PC-9 (cell line): ENCODE measurements at regions of chr19 and their contacts with region 1.

Region 1: DNA sequence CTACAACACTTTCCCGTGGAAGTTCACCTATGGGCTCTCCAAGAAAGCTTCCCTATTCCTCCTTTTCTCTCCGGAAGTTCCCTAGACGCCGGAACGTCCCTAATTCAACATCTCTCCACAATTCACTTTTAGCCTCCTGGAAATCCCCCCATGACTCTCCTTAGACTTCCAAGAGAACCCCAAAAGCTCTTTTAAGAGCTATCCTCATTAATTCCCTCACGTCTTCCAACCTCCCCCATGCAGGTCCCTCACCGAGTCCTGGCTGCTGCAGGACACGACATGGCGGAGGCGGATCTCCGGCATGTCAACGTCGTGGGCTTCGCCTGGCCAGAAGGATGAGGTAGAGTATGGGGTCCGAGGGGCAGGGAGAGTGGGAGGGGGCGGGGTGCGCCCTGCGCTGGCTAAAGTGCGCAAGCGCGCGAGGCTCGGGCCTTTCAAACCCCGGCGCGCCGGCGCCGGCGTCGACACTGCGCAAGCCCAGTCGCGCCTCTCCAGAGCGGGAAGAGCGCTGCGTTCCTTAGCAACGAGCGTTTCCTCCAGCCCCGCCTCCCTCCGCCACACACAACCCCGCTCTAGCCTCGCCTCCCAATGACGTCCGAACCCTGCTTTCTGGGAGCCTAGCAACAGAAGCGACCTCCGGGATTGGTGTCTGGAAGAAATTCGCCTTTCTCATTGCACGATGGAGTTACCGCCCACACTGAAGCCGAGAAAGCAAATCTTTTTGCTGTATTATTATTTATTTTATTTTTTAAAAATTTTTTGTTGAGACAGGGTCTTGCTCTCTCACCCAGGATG is at the starts of genes PINLYP and XRCC1:
- DNase-seq: peak; percentile 92 to 95
- H3K4me3 ChIP-seq: peak within 1 kb of the TSS; percentile 94
- H3K27ac ChIP-seq: no peak within 1 kb of the TSS
- H3K4me1 ChIP-seq: peaks cover 10% of the 10 kb centered on the region; the same call in 1 of the 2 replicates
- H3K27me3 ChIP-seq: no peaks in the 10 kb centered on the region
- CTCF ChIP-seq: no peak
- total RNA-seq, gene PINLYP: 0.53 and 2.0 TPM in 2 replicates
- total RNA-seq, gene XRCC1: 37.2 and 45.1 TPM in 2 replicates

Region 2: DNA sequence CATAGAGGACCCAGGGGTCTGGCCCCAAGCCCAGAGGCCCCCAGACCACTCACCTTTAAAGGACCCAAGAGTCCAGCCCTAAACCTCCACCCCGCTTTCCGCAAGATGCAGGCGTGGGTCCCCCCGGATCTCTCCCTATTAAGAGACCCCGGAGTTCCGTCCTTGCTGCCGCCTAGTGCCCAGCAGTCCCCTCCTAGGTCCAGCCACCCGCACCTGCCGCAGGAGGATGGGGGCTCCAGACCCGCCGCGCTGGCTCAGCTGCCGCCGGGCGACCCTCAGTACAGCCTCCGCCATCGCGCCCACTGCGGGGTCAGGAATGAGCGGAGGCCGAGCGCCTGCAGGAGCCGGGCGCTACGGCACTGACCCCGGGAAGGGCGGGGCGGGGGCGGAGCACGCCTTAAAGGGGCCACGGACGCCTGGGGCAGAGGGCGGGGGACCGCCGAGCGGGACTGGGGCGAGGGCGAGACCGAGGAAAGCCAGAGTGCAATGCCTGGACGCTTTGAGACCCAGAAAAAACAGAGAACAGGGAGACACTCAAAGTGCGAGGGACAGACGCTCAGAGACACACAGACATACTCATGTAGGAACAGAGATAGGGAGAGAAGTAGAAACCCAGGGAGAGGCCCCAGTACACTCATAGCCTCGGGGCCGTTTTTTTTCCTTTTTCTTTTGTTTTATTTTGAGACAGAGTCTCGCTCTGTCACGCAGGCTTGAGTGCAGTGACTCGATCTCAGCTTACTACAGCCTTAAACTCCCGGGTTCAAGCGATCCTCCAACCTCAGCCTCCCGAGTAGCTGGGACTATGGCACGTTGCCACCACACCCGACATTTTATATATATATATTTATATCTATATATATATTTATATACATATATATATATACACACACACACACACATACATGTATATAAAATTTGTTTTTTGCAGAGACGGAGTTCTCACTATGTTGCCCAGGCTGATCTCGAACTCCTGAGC is 48.2 kb before region 1 on chr19 and contains the start of gene ETHE1:
- CTCF ChIA-PET with region 1: interaction called, 4 read pairs
- POLR2A ChIA-PET with region 1: no interaction called
- intact Hi-C with region 1: loop called (anchors 5 kb)
- DNase-seq: peak; percentile 37 to 81
- H3K4me3 ChIP-seq: peak within 1 kb of the TSS; percentile 97
- H3K27ac ChIP-seq: peak within 1 kb of the TSS; percentile 46
- H3K4me1 ChIP-seq: peaks cover 59% of the 10 kb centered on the region
- H3K27me3 ChIP-seq: no peaks in the 10 kb centered on the region
- CTCF ChIP-seq: no peak
- total RNA-seq, gene ETHE1: 83.4 and 89.3 TPM in 2 replicates